ENCODE measurements at regions of chr1 and their contacts with region 1.

Region 1: DNA sequence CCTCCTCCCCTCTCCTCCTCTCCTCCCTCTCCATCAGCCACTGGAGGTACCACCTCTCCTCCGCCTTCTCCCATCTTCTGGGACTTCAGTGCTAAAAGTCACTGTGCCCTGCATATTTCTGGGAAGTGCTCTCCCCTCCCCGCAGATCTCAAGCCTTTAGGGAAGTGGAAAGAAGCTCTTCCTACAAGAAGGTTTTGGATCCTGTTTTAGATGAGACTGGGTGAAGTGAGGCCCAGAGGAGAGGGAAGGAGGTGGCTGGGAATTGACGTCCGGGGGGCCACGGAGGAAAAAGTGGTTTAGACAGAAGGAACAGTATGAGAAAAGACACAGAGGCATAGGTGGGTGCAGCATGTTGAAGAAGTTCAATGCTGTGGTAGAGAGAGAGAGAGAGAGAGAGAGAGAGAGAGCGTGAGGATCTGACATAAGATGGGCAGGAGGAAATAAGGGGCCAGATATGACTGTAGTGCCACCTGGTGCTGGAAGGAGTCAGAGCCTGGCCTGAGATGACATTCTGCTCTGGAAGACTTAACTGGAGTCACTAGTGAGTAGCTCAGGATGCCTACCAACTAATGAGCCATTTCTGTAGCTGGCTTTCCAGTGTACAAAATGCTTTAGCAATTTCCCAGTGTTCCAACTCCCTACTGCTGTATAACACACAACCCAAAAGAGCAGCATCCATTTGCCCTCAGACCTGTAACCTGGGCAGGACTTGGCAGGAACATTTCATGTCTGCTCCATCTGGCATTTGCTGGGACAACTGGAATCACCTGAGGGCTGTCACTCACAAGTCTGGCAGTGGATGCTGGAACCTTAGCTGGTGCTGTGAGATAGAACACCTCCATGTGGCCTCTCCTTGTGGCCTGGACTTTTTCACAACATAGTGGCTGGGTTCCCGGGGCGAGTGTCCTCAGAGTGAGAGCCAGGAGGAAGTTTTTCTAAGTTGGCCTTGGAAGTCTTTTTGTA is 16.6 kb upstream of the ZSCAN20 start:
- DNase-seq: peak; percentile 77
- H3K27ac ChIP-seq: no peak overlapping the region
- CTCF ChIP-seq: peak; percentile 79

Region 2: GRCh38 chr1:33370301-33370700 is 85.5 kb before region 1 on chr1:
- CTCF ChIA-PET with region 1: interaction called, 13 read pairs
- POLR2A ChIA-PET with region 1: no interaction called
- DNase-seq: no peak
- H3K27ac ChIP-seq: no peak overlapping the region
- CTCF ChIP-seq: no peak

Region 3: GRCh38 chr1:33735621-33736020 is 279.8 kb after region 1 on chr1:
- CTCF ChIA-PET with region 1: no interaction called
- POLR2A ChIA-PET with region 1: no interaction called
- DNase-seq: peak; percentile 11
- H3K27ac ChIP-seq: no peak overlapping the region
- CTCF ChIP-seq: no peak